ENCODE measurements at regions of chr3 and their contacts with region 1.

Region 1: GRCh38 chr3:56339671-56340070 is 128.6 kb downstream of the ERC2 start:
- DNase-seq: no peak
- H3K4me3 Mint-ChIP-seq: no peak overlapping the region
- H3K27ac Mint-ChIP-seq: no peak overlapping the region
- H3K4me1 Mint-ChIP-seq: no peaks in the 10 kb centered on the region
- H3K27me3 Mint-ChIP-seq: peaks cover 66% of the 10 kb centered on the region
- CTCF ChIP-seq: no peak

Region 2: DNA sequence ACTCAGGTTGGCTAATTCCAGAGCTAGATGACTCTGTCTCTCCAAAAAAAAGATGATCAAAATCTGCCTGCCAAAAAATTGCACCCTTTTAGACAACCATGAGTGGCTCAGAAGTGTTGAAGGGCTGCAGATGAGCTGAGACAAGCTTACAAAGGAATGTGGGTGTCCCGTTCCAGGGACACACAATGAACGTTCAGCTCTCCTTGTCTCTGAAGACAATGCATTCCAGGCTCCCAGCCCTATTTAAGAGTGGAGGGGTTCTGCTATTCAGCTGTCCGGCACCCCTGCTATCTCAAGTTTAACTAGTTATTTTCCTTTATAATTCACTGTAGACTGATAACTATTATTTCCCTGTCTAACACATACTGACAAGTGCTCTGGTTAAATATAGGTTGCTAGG is 497.5 kb before region 1 on chr3:
- CTCF ChIA-PET with region 1: no interaction called
- intact Hi-C with region 1: no loop called
- DNase-seq: no peak
- H3K4me3 Mint-ChIP-seq: no peak overlapping the region
- H3K27ac Mint-ChIP-seq: no peak overlapping the region
- H3K4me1 Mint-ChIP-seq: no peaks in the 10 kb centered on the region
- H3K27me3 Mint-ChIP-seq: no peaks in the 10 kb centered on the region
- CTCF ChIP-seq: no peak

Region 3: DNA sequence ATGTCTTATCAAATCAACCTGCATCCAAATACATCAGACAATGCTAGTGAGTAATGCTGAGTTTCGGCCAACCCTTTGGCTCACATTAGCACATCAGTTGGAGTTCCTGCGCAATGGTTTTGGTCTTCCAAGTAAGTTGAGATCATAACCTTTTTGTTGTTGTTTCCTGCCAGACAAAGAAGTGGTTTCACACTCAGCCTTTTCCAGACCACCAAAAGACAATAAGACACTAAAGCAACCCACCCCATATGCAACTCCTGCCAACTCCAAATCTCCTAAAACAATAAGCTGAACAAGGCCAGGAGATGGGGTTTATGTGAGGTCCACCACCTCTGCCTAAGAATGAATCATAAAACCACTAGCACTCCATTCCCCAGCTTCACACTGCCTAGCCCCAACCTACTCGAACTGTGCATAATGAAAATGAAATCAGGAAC is 48.4 kb before region 1 on chr3:
- CTCF ChIA-PET with region 1: no interaction called
- intact Hi-C with region 1: no loop called
- DNase-seq: no peak
- H3K4me3 Mint-ChIP-seq: no peak overlapping the region
- H3K27ac Mint-ChIP-seq: no peak overlapping the region
- H3K4me1 Mint-ChIP-seq: no peaks in the 10 kb centered on the region
- H3K27me3 Mint-ChIP-seq: peaks cover 38% of the 10 kb centered on the region
- CTCF ChIP-seq: no peak

Region 4: GRCh38 chr3:56443372-56443771 is 103.7 kb after region 1 on chr3:
- CTCF ChIA-PET with region 1: no interaction called
- intact Hi-C with region 1: loop called (anchors 1 kb)
- DNase-seq: no peak
- H3K4me3 Mint-ChIP-seq: no peak overlapping the region
- H3K27ac Mint-ChIP-seq: no peak overlapping the region
- H3K4me1 Mint-ChIP-seq: no peaks in the 10 kb centered on the region
- H3K27me3 Mint-ChIP-seq: peaks cover 16% of the 10 kb centered on the region
- CTCF ChIP-seq: no peak

Region 5: GRCh38 chr3:56494686-56495322 is 155.1 kb after region 1 on chr3:
- CTCF ChIA-PET with region 1: interaction called, 6 read pairs
- intact Hi-C with region 1: loop called (anchors 1 kb)
- DNase-seq: peak; percentile 79
- H3K4me3 Mint-ChIP-seq: no peak overlapping the region
- H3K27ac Mint-ChIP-seq: no peak overlapping the region
- H3K4me1 Mint-ChIP-seq: no peaks in the 10 kb centered on the region
- H3K27me3 Mint-ChIP-seq: peaks cover 75% of the 10 kb centered on the region
- CTCF ChIP-seq: peak; percentile 78

Region 6: GRCh38 chr3:56547486-56547885 is 207.8 kb after region 1 on chr3:
- CTCF ChIA-PET with region 1: no interaction called
- intact Hi-C with region 1: loop called (anchors 2 kb)
- DNase-seq: no peak
- H3K4me3 Mint-ChIP-seq: no peak overlapping the region
- H3K27ac Mint-ChIP-seq: no peak overlapping the region
- H3K4me1 Mint-ChIP-seq: no peaks in the 10 kb centered on the region
- H3K27me3 Mint-ChIP-seq: peaks cover 52% of the 10 kb centered on the region
- CTCF ChIP-seq: no peak